ENCODE measurements at regions of chr1 and their contacts with region 1.

Region 1: DNA sequence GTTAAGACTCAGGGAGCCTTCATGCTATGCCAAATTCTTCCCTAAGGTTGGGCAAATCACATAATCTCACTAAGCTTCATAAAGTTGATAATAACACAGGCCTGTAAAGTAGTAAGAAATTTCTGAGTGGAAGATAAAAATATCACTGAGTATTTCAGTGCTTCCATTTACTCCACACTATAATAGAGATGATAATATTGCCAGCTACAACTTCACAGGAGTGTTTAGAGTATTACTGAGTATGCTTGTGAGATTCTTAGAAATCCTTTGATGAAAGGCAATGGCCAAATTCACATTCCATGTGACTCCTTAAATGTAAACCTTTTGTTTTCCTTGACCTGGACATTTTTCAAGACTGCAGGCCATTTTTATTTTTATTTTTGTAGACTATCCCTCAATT is 10.4 kb downstream of the ITGB3BP start:
- DNase-seq: no peak
- H3K4me3 Mint-ChIP-seq: no peak overlapping the region
- H3K27ac Mint-ChIP-seq: no peak overlapping the region
- H3K4me1 Mint-ChIP-seq: no peaks in the 10 kb centered on the region
- H3K27me3 Mint-ChIP-seq: no peaks in the 10 kb centered on the region
- CTCF ChIP-seq: no peak

Region 2: GRCh38 chr1:63480057-63480456 is 32.5 kb before region 1 on chr1:
- CTCF ChIA-PET with region 1: no interaction called
- intact Hi-C with region 1: loop called (anchors 5 kb)
- DNase-seq: no peak
- H3K4me3 Mint-ChIP-seq: no peak overlapping the region
- H3K27ac Mint-ChIP-seq: no peak overlapping the region
- H3K4me1 Mint-ChIP-seq: no peaks in the 10 kb centered on the region
- H3K27me3 Mint-ChIP-seq: no peaks in the 10 kb centered on the region
- CTCF ChIP-seq: no peak

Region 3: GRCh38 chr1:63705078-63705477 is 192.5 kb after region 1 on chr1:
- CTCF ChIA-PET with region 1: no interaction called
- intact Hi-C with region 1: no loop called
- DNase-seq: peak; percentile 25
- H3K4me3 Mint-ChIP-seq: peak overlapping the region; percentile 39
- H3K27ac Mint-ChIP-seq: peak overlapping the region; percentile 85
- H3K4me1 Mint-ChIP-seq: peaks cover 55% of the 10 kb centered on the region
- H3K27me3 Mint-ChIP-seq: no peaks in the 10 kb centered on the region
- CTCF ChIP-seq: no peak